ENCODE measurements at regions of chr1 and their contacts with region 1.

Region 1: DNA sequence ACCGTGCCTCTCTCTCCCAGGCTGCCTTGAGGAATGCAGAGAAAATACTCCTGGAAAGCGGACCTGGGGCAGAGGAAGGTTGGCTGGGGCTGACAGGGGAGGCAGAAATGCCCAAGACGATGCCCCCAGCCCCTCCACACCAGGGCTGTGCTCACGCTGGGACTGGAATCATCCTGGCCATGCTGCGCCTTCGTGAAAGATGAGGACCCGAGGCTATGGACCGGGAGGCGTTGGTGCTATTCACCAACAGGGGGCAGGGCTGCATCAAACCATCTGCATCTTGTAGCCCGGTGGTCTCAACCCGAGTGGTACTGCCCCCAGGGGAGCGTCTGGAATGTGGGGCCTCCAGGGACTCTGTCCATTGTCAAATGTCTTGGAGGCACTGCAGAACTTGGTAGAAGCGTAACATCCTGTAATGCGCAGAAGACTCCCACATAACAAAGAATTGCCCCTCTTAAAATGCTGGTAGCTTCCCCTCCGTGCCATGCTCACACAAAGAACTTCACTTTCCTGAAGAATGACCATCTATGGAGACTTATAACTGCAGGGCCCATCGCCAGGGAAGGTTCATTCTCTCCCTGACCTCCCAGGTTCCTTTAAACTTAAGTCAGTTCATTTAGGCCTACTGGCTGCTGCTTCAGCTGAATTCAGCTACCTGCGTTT is 251.2 kb downstream of the RRAGC start:
- DNase-seq: peak; percentile 92
- H3K4me3 ChIP-seq: no peak overlapping the region
- H3K27ac ChIP-seq: no peak overlapping the region
- H3K4me1 ChIP-seq: no peaks in the 10 kb centered on the region
- H3K27me3 ChIP-seq: peaks cover 0 to 24% (median 0%) of the 10 kb centered on the region in 4 donors
- CTCF ChIP-seq: peak in 2 of 3 experiments; percentile 18 to 44
- EP300 ChIP-seq: no peak
- POLR2A ChIP-seq: no peak

Region 2: GRCh38 chr1:38546636-38547035 is 61.7 kb before region 1 on chr1:
- intact Hi-C with region 1: no loop called
- DNase-seq: no peak
- H3K4me3 ChIP-seq: no peak overlapping the region
- H3K27ac ChIP-seq: no peak overlapping the region
- H3K4me1 ChIP-seq: peaks cover 0 to 11% (median 10%) of the 10 kb centered on the region in 4 donors
- H3K27me3 ChIP-seq: peaks cover 0 to 7% (median 0%) of the 10 kb centered on the region in 4 donors
- CTCF ChIP-seq: no peak
- EP300 ChIP-seq: no peak
- POLR2A ChIP-seq: no peak

Region 3: DNA sequence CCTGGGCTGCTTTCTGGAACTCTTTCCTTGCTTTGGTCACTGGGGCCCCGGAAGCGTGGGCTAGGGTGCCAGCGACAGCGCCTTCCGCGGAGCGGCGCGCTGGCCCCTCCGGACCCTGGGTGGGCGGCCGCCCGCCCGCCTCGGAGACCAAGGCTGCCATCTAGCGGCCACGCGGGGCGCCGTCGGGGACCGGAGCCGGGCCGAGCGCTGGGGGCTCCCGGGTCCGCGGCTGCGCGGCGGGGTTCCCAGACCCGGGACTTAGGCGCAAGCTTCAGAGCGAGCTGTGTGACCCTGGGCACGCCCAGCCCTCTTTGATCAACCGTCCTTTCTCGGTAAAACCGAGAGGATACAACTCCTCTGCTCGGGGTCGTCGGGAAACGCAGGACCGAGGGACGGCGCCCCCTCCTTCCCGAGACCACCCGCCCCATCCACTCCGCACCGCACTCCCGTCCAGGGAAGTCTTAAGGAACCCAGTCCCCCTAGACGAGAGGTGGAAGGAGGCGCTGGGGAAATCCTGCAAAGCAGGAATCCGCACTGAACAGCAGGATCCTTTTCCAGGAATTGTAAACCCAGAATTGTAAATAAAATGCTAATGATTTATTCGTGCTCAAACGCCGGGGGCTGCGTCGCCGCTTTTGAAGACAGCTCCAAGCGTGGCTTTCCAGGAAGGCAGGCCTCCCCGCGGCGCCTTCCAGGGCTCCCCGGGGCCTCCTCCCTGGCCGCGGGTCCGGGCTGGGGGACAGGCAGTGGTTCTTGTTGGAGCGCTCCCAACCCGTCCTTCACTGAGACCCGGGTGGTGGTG is 210.0 kb after region 1 on chr1:
- intact Hi-C with region 1: loop called (anchors 10 kb)
- DNase-seq: no peak
- H3K4me3 ChIP-seq: peak overlapping the region; percentile 13 to 51 (median 42)
- H3K27ac ChIP-seq: no peak overlapping the region
- H3K4me1 ChIP-seq: peaks cover 10 to 19% (median 18%) of the 10 kb centered on the region in 4 donors
- H3K27me3 ChIP-seq: peaks cover 7 to 81% (median 40%) of the 10 kb centered on the region in 4 donors
- CTCF ChIP-seq: peak; percentile 51 to 82 (median 66)
- EP300 ChIP-seq: no peak
- POLR2A ChIP-seq: no peak

Region 4: DNA sequence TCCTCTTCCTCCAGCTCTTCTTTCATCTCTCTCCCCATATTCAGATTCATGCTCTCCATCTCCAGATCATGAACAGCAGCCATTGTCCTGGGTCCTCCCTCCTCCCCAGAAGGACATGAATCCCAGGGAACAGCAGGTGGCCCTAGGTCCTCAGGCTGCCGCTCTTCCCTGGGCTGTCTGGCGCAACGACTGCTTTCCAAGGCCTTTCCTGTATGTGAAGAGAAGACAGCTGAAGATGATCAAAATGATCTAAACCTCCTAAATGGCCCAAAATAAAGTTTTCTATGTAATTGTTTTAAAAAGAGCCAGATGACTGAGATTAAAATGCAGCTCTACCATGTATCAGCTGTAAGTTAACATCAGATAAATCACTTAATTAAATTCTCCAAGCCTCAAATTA is 310.8 kb after region 1 on chr1:
- intact Hi-C with region 1: no loop called
- DNase-seq: no peak
- H3K4me3 ChIP-seq: no peak overlapping the region
- H3K27ac ChIP-seq: no peak overlapping the region
- H3K4me1 ChIP-seq: no peaks in the 10 kb centered on the region
- H3K27me3 ChIP-seq: no peaks in the 10 kb centered on the region
- CTCF ChIP-seq: peak in 1 of 3 experiments; percentile 17
- EP300 ChIP-seq: no peak
- POLR2A ChIP-seq: no peak

Measured in esophagus muscularis mucosa (tissue), 4 donors.